ENCODE measurements at regions of chr13 and their contacts with region 1.

Region 1: GRCh38 chr13:48731957-48732569 is 78.3 kb downstream of the CYSLTR2 start:
- DNase-seq: peak; percentile 73
- ATAC-seq: peak; percentile 94
- H3K4me3 Mint-ChIP-seq: 0 out of 2 replicates have a peak overlapping the region, but pooled peaks have one; percentile 1
- H3K27ac Mint-ChIP-seq: no peak overlapping the region
- H3K4me1 Mint-ChIP-seq: peaks cover 29% of the 10 kb centered on the region
- H3K27me3 Mint-ChIP-seq: peaks cover 15% of the 10 kb centered on the region
- CTCF ChIP-seq: peak; percentile 90

Region 2: GRCh38 chr13:48595431-48596429 is 136.3 kb before region 1 on chr13:
- CTCF ChIA-PET with region 1: interaction called, 10 read pairs
- POLR2A ChIA-PET with region 1: no interaction called
- DNase-seq: peak; percentile 32
- ATAC-seq: peak; percentile 79
- H3K4me3 Mint-ChIP-seq: no peak overlapping the region
- H3K27ac Mint-ChIP-seq: no peak overlapping the region
- H3K4me1 Mint-ChIP-seq: peaks cover 53% of the 10 kb centered on the region
- H3K27me3 Mint-ChIP-seq: peaks cover 2% of the 10 kb centered on the region; the same call in 1 of the 2 replicates
- CTCF ChIP-seq: no peak

Measured in WTC11 (cell line).